Common myeloid progenitor, CD34-positive (primary cell): ENCODE measurements at regions of chr16 and their contacts with region 1.

Region 1: GRCh38 chr16:31248344-31248743 is 11.4 kb upstream of the ITGAM start:
- DNase-seq: no peak
- H3K4me3 ChIP-seq: no peak overlapping the region
- H3K27ac ChIP-seq: no peak overlapping the region
- H3K4me1 ChIP-seq: peaks cover 9 to 26% (median 13%) of the 10 kb centered on the region in 4 experiments
- H3K27me3 ChIP-seq: no peaks in the 10 kb centered on the region

Region 2: DNA sequence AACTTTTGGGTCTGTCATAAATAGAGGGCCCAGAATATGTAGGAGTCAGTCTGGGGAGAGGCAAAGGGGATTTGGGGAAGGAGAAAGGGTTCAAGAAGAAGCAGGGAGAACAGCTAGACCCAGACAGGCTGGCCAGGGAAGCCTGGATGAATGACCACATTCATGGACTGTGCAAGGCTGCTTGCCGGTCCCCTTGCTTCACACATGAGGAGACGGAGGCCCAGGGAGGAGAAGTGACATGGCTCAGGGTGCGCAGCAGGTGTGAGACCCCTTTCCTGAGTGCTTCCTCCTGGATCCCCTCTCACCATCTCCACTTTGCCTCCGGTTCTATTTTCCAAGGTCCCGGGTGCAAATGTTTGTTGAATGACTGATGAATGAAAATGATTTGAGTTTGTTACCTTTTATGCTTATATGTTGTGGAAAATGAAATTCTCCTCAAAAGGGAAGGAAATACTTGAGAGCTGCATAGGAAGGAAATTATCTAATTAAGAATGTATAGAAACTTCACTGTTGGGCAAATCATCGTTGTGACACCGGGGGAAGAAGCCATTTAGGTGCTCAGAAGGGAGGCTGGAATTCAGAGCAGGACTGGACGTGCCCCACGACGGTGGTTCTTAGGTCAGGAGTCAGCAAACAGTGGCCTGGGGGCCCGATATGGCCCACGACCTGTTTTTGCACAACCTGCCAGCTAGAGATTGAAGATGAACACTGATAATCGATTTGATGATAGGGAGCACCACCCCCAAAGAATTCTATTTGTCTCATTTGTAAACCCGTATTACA is 12.0 kb after region 1 on chr16:
- CTCF ChIA-PET with region 1: interaction called, 16 read pairs
- POLR2A ChIA-PET with region 1: interaction called, 6 read pairs
- DNase-seq: peak in 1 of 3 donors; percentile 31
- H3K4me3 ChIP-seq: peak overlapping the region in 5 of 7 experiments; percentile 14 to 59 (median 37)
- H3K27ac ChIP-seq: peak overlapping the region in 1 of 2 experiments; percentile 2
- H3K4me1 ChIP-seq: peaks cover 16 to 71% (median 53%) of the 10 kb centered on the region in 4 experiments
- H3K27me3 ChIP-seq: no peaks in the 10 kb centered on the region